CD4-positive, alpha-beta T cell (primary cell): ENCODE measurements at regions of chr11 and their contacts with region 1.

Region 1: GRCh38 chr11:72141066-72141465 is 5.5 kb downstream of the FOLR3 start:
- DNase-seq: peak in 1 of 14 experiments; percentile 4
- ATAC-seq: peak; percentile 25
- H3K4me3 ChIP-seq: no peak overlapping the region
- H3K4me3 Mint-ChIP-seq: no peak overlapping the region
- H3K27ac ChIP-seq: no peak overlapping the region
- H3K27ac Mint-ChIP-seq: no peak overlapping the region
- H3K4me1 ChIP-seq: no peaks in the 10 kb centered on the region
- H3K4me1 Mint-ChIP-seq: no peaks in the 10 kb centered on the region
- H3K27me3 ChIP-seq: no peaks in the 10 kb centered on the region
- H3K27me3 Mint-ChIP-seq: peaks cover 11% of the 10 kb centered on the region
- CTCF ChIP-seq: no peak

Region 2: DNA sequence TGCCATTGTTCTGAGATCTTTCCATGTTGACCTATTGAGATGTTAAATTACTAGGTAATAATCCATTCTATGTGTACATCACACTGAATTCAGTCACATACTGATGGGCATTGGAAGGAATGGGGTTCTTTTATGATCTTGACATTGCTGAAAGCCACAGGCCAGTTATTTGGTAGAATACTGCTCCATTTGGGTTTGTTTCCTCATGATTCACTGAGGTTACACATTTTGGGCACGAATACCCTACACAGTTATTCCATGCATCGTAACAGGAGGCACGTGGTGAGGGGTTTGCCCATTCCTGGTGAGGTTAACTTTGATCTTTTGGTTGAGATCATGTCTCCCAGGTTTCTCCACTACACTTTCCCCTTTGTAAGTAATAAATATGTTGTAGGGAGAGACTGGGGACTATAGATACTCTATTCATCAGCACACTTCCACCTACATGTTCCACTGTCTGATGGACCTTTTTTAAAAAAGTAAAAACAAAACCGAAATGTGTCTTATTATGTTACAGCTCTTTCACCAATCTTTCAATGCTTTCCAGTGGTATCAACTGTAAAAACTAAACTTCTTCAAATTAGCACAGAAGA is 38.8 kb after region 1 on chr11:
- CTCF ChIA-PET with region 1: interaction called, 4 read pairs
- POLR2A ChIA-PET with region 1: no interaction called
- intact Hi-C with region 1: loop called in 1 of 2 experiments (anchors 2 kb)
- DNase-seq: no peak
- ATAC-seq: no peak
- H3K4me3 ChIP-seq: no peak overlapping the region
- H3K4me3 Mint-ChIP-seq: no peak overlapping the region
- H3K27ac ChIP-seq: no peak overlapping the region
- H3K27ac Mint-ChIP-seq: no peak overlapping the region
- H3K4me1 ChIP-seq: no peaks in the 10 kb centered on the region
- H3K4me1 Mint-ChIP-seq: no peaks in the 10 kb centered on the region
- H3K27me3 ChIP-seq: no peaks in the 10 kb centered on the region
- H3K27me3 Mint-ChIP-seq: peaks cover 11% of the 10 kb centered on the region
- CTCF ChIP-seq: no peak